Esophagus squamous epithelium (tissue), 5 donors: ENCODE measurements at regions of chr19 and their contacts with region 1.

Region 1: DNA sequence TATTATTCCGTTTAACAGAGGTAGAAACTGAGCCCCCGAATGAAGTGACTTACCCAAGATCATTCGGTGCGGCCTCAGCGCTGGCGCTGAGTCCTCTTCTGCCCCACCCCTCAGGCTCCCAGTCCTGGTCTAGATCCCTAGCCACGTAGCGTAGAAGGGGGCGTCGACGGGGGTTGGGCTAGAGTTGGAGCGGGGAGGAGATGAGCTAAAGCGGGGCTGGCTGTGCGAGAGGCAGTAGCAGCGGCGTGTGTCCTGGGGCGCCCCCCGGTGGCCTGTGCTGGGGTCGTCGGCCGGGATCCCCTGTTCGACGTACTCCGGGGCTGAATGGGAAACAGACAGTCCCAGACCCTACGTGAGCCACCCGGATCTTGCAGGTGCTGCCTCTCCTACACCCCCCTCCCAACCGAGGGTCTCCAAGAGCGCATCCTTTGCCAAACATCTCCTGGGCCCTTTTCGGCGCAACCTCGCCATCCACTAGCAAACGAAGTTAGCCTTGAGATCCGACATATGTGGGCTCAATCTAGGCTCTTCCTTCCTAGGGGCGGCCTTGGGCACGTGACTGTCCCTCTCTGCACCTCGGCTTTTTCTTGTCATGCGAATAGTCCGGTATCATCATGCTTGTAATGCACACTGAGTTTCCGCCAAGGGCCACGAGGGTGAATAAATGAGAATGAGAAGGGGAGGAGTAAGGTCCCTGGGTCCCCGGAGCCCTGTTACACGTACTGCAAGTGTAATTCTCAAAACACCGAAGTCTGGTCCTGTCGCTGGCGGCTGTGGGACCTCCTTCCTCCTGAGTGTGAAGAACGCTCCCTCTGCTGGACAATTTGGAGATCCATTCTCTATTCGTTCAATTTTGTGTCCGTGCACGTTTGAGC is 47.7 kb downstream of the CYP4F22 start:
- DNase-seq: peak; percentile 54
- H3K4me3 ChIP-seq: peak overlapping the region; percentile 9 to 51 (median 31)
- H3K27ac ChIP-seq: peak overlapping the region in 3 of 4 donors; percentile 23 to 63 (median 62)
- H3K4me1 ChIP-seq: peaks cover 16 to 25% (median 18%) of the 10 kb centered on the region in 3 donors
- H3K27me3 ChIP-seq: peaks cover 0 to 49% (median 2%) of the 10 kb centered on the region in 4 donors
- CTCF ChIP-seq: peak; percentile 60 to 88 (median 83)
- POLR2A ChIP-seq: no peak

Region 2: GRCh38 chr19:15091901-15092753 is 463.9 kb before region 1 on chr19:
- intact Hi-C with region 1: loop called (anchors 5 kb)
- DNase-seq: no peak
- H3K4me3 ChIP-seq: no peak overlapping the region
- H3K27ac ChIP-seq: peak overlapping the region in 1 of 4 donors; percentile 22
- H3K4me1 ChIP-seq: peaks cover 0 to 7% (median 4%) of the 10 kb centered on the region in 3 donors
- H3K27me3 ChIP-seq: peaks cover 0 to 14% (median 0%) of the 10 kb centered on the region in 4 donors
- CTCF ChIP-seq: peak; percentile 50 to 68 (median 58)
- POLR2A ChIP-seq: no peak

Region 3: GRCh38 chr19:15177269-15178116 is 378.5 kb before region 1 on chr19:
- intact Hi-C with region 1: loop called (anchors 5 kb)
- DNase-seq: no peak
- H3K4me3 ChIP-seq: peak overlapping the region in 3 of 4 donors; percentile 10 to 59 (median 35)
- H3K27ac ChIP-seq: peak overlapping the region in 3 of 4 donors; percentile 28 to 50 (median 30)
- H3K4me1 ChIP-seq: peaks cover 0 to 17% (median 7%) of the 10 kb centered on the region in 3 donors
- H3K27me3 ChIP-seq: peaks cover 0 to 17% (median 0%) of the 10 kb centered on the region in 4 donors
- CTCF ChIP-seq: peak; percentile 94 to 99 (median 97)
- POLR2A ChIP-seq: no peak

Region 4: GRCh38 chr19:15264061-15264932 is 291.7 kb before region 1 on chr19:
- intact Hi-C with region 1: loop called (anchors 10 kb)
- DNase-seq: no peak
- H3K4me3 ChIP-seq: no peak overlapping the region
- H3K27ac ChIP-seq: peak overlapping the region in 3 of 4 donors; percentile 49 to 87 (median 75)
- H3K4me1 ChIP-seq: peaks cover 15 to 60% (median 35%) of the 10 kb centered on the region in 3 donors
- H3K27me3 ChIP-seq: no peaks in the 10 kb centered on the region
- CTCF ChIP-seq: peak; percentile 73 to 85 (median 82)
- POLR2A ChIP-seq: peak in 1 of 4 donors; percentile 14

Region 5: DNA sequence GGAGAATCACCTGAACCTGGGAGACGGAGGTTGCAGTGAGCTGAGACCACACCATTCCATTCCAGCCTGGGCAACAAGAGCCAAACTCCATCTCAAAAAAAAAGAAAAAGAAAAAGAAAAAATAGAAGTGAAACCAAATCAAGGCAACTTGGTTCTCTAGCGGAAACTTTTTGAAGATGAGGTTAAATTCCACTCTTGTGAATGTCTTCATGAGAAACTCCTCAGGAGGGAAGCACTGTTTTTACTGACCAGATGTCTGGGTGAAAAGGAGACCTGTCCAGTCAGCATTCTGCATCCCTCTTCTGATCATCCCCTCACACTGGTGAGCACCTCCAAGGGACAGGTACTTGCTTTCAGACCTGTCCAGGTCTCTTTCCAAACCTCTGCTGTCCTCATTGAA is 239.5 kb before region 1 on chr19:
- intact Hi-C with region 1: no loop called
- DNase-seq: no peak
- H3K4me3 ChIP-seq: no peak overlapping the region
- H3K27ac ChIP-seq: peak overlapping the region in 1 of 4 donors; percentile 11
- H3K4me1 ChIP-seq: peaks cover 56 to 100% (median 78%) of the 10 kb centered on the region in 3 donors
- H3K27me3 ChIP-seq: no peaks in the 10 kb centered on the region
- CTCF ChIP-seq: no peak
- POLR2A ChIP-seq: no peak

Region 6: DNA sequence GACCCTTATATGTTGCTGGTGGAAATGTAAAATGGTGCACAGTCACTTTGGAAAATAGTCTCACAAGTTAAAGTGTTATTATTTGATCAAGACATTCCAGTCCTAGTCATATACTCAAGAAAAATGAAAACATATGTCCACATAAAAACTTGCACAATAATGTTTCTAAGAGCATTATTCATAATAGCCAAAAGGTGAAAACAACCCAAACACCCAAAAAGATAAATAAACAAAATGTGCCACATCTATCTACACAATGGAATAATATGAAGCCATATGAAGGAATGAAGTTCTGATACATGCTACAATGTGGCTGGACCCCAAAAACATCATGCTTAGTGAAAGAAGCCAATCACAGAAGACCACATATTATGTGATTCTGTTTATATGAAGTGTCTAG is 162.0 kb before region 1 on chr19:
- intact Hi-C with region 1: loop called (anchors 10 kb)
- DNase-seq: no peak
- H3K4me3 ChIP-seq: no peak overlapping the region
- H3K27ac ChIP-seq: no peak overlapping the region
- H3K4me1 ChIP-seq: no peaks in the 10 kb centered on the region
- H3K27me3 ChIP-seq: no peaks in the 10 kb centered on the region
- CTCF ChIP-seq: no peak
- POLR2A ChIP-seq: no peak

Region 7: GRCh38 chr19:15449620-15450527 is 106.1 kb before region 1 on chr19 and contains the start of gene WIZ:
- intact Hi-C with region 1: loop called (anchors 10 kb)
- DNase-seq: no peak
- H3K4me3 ChIP-seq: peak within 1 kb of the TSS; percentile 43 to 88 (median 70)
- H3K27ac ChIP-seq: peak within 1 kb of the TSS; percentile 76 to 94 (median 86)
- H3K4me1 ChIP-seq: peaks cover 14 to 30% (median 22%) of the 10 kb centered on the region in 3 donors
- H3K27me3 ChIP-seq: peaks cover 0 to 20% (median 0%) of the 10 kb centered on the region in 4 donors
- CTCF ChIP-seq: no peak
- POLR2A ChIP-seq: no peak
- total RNA-seq, gene WIZ: 17.2 to 36.5 (median 30.0) TPM

Region 8: DNA sequence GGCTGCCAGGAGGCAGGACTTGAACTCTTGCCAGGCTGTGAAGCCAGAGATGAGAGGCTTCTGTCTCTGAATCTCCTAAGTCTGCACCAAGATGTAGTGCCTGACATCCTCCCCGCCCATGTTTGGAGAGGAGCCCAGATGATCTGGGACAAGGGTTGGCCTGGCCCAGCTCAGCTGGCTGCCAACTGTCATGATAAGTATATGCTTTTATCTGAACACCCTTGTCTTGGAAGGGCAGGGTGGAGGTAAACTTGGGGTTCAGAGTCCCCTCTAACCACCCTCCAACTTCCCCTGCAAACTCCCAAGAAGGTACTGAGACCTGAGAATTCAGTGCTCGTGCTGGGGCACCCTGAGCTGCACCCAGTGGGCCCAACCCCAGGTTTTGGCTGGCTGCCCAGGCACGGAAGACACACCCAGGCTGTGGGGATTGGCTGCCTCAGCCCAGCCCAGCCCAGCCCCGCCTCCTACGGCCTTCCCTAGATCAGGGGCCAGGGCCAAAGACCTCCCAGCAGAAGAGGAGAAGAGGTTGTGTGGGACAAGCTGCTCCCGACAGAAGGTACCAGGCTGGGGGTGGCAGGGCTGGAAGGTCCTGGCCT is 116.7 kb after region 1 on chr19 and contains the start of gene CYP4F12:
- intact Hi-C with region 1: no loop called
- DNase-seq: peak; percentile 5
- H3K4me3 ChIP-seq: peak within 1 kb of the TSS; percentile 27 to 59 (median 44)
- H3K27ac ChIP-seq: peak within 1 kb of the TSS; percentile 81 to 91 (median 86)
- H3K4me1 ChIP-seq: peaks cover 0 to 50% (median 16%) of the 10 kb centered on the region in 3 donors
- H3K27me3 ChIP-seq: peaks cover 0 to 6% (median 0%) of the 10 kb centered on the region in 4 donors
- CTCF ChIP-seq: no peak
- POLR2A ChIP-seq: peak in 2 of 4 donors; percentile 15 to 44
- total RNA-seq, gene CYP4F12: 34.5 to 79.3 (median 61.0) TPM